IMR-90 (cell line): ENCODE measurements at regions of chr12 and their contacts with region 1.

Region 1: DNA sequence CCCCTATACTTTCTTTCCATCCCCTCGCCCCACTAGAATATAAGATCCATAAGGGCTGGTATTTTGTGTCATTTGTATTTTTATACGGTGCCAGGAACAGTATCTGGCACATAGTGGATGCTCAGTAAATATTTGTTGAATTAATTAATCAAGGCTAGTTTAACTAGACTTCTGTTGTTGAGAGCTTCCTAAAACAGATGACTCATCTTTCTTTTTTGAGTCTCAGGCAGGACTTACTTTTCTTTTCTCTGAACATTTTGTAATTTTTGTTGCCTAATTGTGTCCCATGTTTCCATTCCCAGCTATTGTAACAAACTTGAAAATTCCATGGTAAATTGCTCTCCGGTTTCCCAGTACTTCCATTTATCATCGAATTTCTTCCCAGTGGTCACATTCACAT is 16.7 kb downstream of the STK38L start:
- DNase-seq: peak; percentile 53
- ATAC-seq: peak; percentile 68
- H3K4me3 ChIP-seq: no peak overlapping the region
- H3K27ac ChIP-seq: no peak overlapping the region
- H3K4me1 ChIP-seq: peaks cover 14% of the 10 kb centered on the region
- H3K27me3 ChIP-seq: no peaks in the 10 kb centered on the region
- CTCF ChIP-seq: no peak
- POLR2A ChIP-seq: no peak
- RAD21 ChIP-seq: no peak

Region 2: GRCh38 chr12:26360062-26360461 is 900.7 kb before region 1 on chr12:
- CTCF ChIA-PET with region 1: no interaction called
- POLR2A ChIA-PET with region 1: no interaction called
- dilution Hi-C with region 1: no loop called
- in situ Hi-C with region 1: no loop called
- intact Hi-C with region 1: loop called (anchors 5 kb)
- DNase-seq: no peak
- ATAC-seq: no peak
- H3K4me3 ChIP-seq: no peak overlapping the region
- H3K27ac ChIP-seq: no peak overlapping the region
- H3K4me1 ChIP-seq: no peaks in the 10 kb centered on the region
- H3K27me3 ChIP-seq: no peaks in the 10 kb centered on the region
- CTCF ChIP-seq: no peak
- POLR2A ChIP-seq: no peak
- RAD21 ChIP-seq: no peak

Region 3: GRCh38 chr12:27343255-27344000 is 82.7 kb after region 1 on chr12:
- CTCF ChIA-PET with region 1: no interaction called
- POLR2A ChIA-PET with region 1: no interaction called
- dilution Hi-C with region 1: no loop called
- in situ Hi-C with region 1: no loop called
- intact Hi-C with region 1: no loop called
- DNase-seq: peak; percentile 97
- ATAC-seq: peak; percentile 95
- H3K4me3 ChIP-seq: no peak overlapping the region; the same call in 1 of the 2 replicates
- H3K27ac ChIP-seq: peak overlapping the region; percentile 75
- H3K4me1 ChIP-seq: peaks cover 17% of the 10 kb centered on the region
- H3K27me3 ChIP-seq: no peaks in the 10 kb centered on the region
- CTCF ChIP-seq: no peak
- POLR2A ChIP-seq: no peak
- RAD21 ChIP-seq: 0 out of 2 replicates have a peak, but pooled peaks have one; percentile 1